MCF 10A (cell line): ENCODE measurements at regions of chr2 and their contacts with region 1.

Region 1: DNA sequence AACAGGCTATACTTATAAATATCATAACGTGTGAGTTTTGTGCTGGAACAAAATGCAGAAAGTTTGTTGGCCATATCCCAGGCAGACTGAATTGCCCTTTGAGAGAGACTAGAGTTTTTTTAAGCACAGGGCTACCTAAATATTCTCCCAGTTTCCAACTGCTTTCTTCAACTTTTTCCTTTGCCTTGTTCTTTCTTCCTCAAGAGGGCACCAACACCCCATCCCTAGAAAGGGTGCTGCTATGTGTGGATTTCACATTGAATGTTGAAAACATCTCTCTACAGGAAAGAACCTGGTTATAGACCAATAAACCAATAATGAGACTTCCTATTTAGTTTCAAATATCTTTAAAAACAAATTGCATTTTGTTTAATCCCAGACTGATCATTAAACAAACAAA is 87.9 kb downstream of the ICOS start:
- DNase-seq: peak; percentile 64
- H3K4me3 Mint-ChIP-seq: no peak overlapping the region
- H3K27ac Mint-ChIP-seq: no peak overlapping the region
- H3K4me1 Mint-ChIP-seq: peaks cover 6% of the 10 kb centered on the region
- H3K27me3 Mint-ChIP-seq: no peaks in the 10 kb centered on the region
- CTCF ChIP-seq: peak; percentile 67

Region 2: DNA sequence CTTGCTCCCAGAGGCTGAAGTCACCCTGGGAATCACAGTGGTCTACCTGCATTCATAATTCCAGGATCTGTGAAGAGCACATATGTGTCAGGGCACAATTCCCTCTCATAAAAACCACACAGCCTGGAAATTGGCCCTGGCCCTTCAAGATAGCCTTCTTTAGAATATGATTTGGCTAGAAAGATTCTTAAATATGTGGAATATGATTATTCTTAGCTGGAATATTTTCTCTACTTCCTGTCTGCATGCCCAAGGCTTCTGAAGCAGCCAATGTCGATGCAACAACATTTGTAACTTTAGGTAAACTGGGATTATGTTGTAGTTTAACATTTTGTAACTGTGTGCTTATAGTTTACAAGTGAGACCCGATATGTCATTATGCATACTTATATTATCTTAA is 63.7 kb before region 1 on chr2:
- CTCF ChIA-PET with region 1: no interaction called
- POLR2A ChIA-PET with region 1: no interaction called
- intact Hi-C with region 1: no loop called
- DNase-seq: no peak
- H3K4me3 Mint-ChIP-seq: no peak overlapping the region
- H3K27ac Mint-ChIP-seq: no peak overlapping the region
- H3K4me1 Mint-ChIP-seq: no peaks in the 10 kb centered on the region
- H3K27me3 Mint-ChIP-seq: peaks cover 28% of the 10 kb centered on the region
- CTCF ChIP-seq: no peak

Region 3: GRCh38 chr2:204177977-204178540 is 153.6 kb after region 1 on chr2:
- CTCF ChIA-PET with region 1: interaction called, 7 read pairs
- POLR2A ChIA-PET with region 1: no interaction called
- intact Hi-C with region 1: loop called (anchors 1 kb)
- DNase-seq: peak; percentile 60
- H3K4me3 Mint-ChIP-seq: no peak overlapping the region
- H3K27ac Mint-ChIP-seq: no peak overlapping the region
- H3K4me1 Mint-ChIP-seq: no peaks in the 10 kb centered on the region
- H3K27me3 Mint-ChIP-seq: peaks cover 23% of the 10 kb centered on the region
- CTCF ChIP-seq: peak; percentile 35